Activated T-helper 1 cell treated with anti-CD3 and anti-CD28 coated beads, Interleukin-12 subunit alpha, Interleukin-12 subunit beta, Interleukin-2, Interleukin-4 antibody, amounts not matched to agents 30 ng/mL and 10 ng/mL and 1 ng/mL, durations not matched to agents 14 hours and 24 hours and 36 hours (primary cell): ENCODE measurements at regions of chr22 and their contacts with region 1.

Region 1: DNA sequence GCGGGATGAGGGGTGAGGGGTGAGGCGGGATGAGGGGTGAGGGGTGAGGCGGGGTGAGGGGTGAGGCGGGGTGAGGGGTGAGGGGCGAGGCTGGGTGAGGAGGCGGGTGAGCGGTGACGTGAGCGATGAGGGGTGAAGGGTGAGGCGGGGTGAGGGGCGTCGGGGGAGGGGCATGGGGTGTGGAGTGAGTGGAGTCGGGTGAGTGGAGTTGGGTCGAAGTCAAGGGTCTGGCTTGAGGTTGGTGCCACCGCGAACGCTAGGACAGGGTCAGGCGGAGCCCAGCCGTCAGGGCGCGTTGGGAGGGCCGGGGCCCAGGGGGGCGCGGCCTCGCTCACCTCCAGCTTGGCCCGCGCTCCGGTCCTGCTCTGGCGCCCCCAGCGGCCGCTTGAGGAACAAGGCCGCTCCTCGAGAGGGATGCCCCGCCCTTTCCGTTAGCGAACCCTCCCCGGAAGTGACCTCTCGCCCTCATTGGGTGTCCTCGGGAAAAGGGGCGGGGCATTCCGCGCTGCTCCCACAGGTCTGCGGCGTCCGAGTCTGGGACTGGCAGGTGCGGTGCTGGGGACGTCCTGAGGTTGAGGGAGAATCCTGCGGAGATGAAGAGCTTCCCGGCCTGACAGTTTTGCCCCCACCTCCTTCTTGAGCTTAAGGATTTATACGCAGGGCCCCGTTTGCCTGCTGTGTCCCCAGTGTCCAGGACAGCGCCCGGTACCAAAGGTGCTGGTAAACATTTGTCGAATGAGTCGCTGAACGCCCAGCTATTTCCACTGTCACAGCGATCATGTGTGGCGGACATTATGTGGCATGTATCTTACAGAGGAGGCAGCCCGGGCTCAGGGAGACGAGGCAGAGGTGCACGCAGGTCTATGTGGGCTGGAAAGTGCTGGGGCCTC is at the start of gene SYCE3:
- DNase-seq: peak; percentile 98
- H3K4me3 Mint-ChIP-seq: peak within 1 kb of the TSS; percentile 88
- H3K27ac Mint-ChIP-seq: peak within 1 kb of the TSS; percentile 77
- H3K4me1 Mint-ChIP-seq: peaks cover 20% of the 10 kb centered on the region
- H3K27me3 Mint-ChIP-seq: peaks cover 9% of the 10 kb centered on the region
- total RNA-seq, gene SYCE3: 0.83 TPM in 1 of 2 replicates, not detected in the other

Region 2: DNA sequence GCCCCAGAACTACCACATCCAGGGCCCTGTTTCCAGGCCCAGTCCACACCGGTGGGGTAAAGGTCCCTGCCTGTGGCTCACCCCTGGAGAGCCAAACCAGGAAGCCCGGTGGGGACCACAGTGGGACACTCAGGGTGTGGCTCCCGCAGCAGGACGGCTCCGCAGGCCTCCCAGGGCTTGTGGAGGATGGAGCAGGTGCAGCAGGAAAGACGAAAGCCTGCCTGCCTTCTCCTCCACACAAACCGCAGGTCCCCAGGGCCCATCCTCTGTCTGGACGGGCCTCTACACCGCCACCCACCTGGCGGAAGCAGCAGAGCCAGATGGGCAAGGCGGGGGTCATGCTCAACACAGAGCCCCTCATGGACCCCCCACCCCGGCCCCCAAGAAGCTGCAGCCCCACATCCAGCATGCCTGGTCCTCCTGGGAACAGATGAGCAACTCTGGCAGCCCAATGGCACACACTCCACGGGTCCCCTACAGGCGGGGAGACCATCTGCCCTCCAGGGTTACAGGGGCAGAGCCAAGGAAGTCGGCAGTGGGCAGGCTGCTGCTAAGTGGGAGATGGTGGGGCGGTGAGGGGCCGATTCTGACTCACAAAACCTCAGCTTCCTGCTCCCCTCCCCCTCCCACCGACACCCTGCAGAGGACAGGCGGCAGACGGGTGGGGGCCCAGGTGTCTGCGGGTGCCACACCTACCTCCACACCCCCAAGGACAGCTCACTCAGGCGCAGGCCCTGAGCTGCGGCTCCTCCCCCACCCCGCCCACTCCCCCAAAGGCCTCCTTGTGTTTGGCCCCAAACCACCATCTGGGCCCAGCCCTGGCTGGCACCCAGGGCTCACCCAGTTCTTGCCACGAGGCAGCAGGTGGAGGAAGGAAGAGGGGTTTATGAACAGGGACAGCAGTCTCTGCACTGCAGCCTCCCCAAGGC is 93.1 kb before region 1 on chr22:
- intact Hi-C with region 1: loop called (anchors 2 kb)
- DNase-seq: peak; percentile 92
- H3K4me3 Mint-ChIP-seq: peak overlapping the region; percentile 48
- H3K27ac Mint-ChIP-seq: peak overlapping the region; percentile 90
- H3K4me1 Mint-ChIP-seq: peaks cover 53% of the 10 kb centered on the region
- H3K27me3 Mint-ChIP-seq: no peaks in the 10 kb centered on the region

Region 3: GRCh38 chr22:50530877-50531545 is 31.8 kb before region 1 on chr22:
- intact Hi-C with region 1: loop called (anchors 1 kb)
- DNase-seq: peak; percentile 83
- H3K4me3 Mint-ChIP-seq: peak overlapping the region; percentile 93
- H3K27ac Mint-ChIP-seq: peak overlapping the region; percentile 99
- H3K4me1 Mint-ChIP-seq: peaks cover 48% of the 10 kb centered on the region
- H3K27me3 Mint-ChIP-seq: no peaks in the 10 kb centered on the region